Transverse colon (tissue), 4 donors: ENCODE measurements at regions of chr17 and their contacts with region 1.

Region 1: GRCh38 chr17:28812091-28812747 is 30.4 kb downstream of the FAM222B start:
- DNase-seq: peak; percentile 98
- H3K4me3 ChIP-seq: peak overlapping the region; percentile 78 to 99 (median 86)
- H3K27ac ChIP-seq: peak overlapping the region; percentile 91 to 97 (median 96)
- H3K4me1 ChIP-seq: peaks cover 24 to 46% (median 44%) of the 10 kb centered on the region in 4 donors
- H3K27me3 ChIP-seq: no peaks in the 10 kb centered on the region
- CTCF ChIP-seq: no peak
- EP300 ChIP-seq: no peak
- POLR2A ChIP-seq: peak; percentile 33

Region 2: GRCh38 chr17:28763804-28764266 is 48.4 kb before region 1 on chr17:
- in situ Hi-C with region 1: no loop called
- intact Hi-C with region 1: loop called (anchors 10 kb)
- DNase-seq: peak; percentile 81
- H3K4me3 ChIP-seq: no peak overlapping the region
- H3K27ac ChIP-seq: no peak overlapping the region
- H3K4me1 ChIP-seq: peaks cover 0 to 17% (median 7%) of the 10 kb centered on the region in 4 donors
- H3K27me3 ChIP-seq: no peaks in the 10 kb centered on the region
- CTCF ChIP-seq: peak; percentile 80 to 92 (median 88)
- EP300 ChIP-seq: no peak
- POLR2A ChIP-seq: no peak